ENCODE measurements at regions of chr6 and their contacts with region 1.

Region 1: DNA sequence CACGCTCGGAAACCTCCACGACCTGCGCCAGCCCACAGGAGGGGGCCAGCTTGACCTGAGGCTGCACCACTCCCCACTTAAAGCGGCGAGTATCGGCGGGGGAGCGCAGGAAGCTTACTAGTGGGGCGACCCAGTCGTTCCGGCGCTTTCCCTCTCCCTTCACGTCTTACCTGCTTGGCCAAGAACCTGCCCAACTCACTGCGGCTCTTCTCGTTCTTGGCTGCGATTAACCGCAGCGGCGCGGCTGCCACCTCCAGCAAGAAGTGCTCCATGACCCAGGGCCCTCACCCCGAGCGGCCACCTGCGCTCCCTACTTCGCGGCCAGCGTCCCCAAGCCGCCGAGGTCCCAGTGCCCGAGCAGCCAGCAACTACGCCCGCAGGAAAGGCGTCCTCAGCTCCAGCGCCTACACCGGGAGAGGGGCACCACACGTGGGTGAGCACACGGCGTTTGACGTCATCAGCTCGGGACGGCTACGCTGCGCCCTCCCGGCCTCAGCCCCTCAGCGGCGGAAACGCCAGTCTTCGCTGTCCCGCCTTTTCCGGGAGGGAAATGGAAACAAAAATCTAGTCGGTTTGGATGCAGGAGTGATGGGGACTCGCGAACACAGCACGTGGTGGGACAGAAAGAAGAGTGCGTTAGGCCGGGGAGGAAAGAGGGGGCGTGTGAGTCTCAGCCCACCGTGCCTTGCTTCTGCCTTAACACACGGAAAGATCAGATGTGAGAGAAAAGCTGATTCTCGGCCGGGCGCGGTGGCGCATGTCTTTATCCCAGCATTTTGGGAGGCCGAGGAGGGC is at the start of gene MDN1:
- DNase-seq: peak; percentile 93
- H3K4me3 Mint-ChIP-seq: peak within 1 kb of the TSS; percentile 86
- H3K27ac Mint-ChIP-seq: peak within 1 kb of the TSS; percentile 77
- H3K4me1 Mint-ChIP-seq: peaks cover 11% of the 10 kb centered on the region
- H3K27me3 Mint-ChIP-seq: no peaks in the 10 kb centered on the region
- CTCF ChIP-seq: no peak
- total RNA-seq, gene MDN1: 31.1 and 39.2 TPM in 2 replicates

Region 2: DNA sequence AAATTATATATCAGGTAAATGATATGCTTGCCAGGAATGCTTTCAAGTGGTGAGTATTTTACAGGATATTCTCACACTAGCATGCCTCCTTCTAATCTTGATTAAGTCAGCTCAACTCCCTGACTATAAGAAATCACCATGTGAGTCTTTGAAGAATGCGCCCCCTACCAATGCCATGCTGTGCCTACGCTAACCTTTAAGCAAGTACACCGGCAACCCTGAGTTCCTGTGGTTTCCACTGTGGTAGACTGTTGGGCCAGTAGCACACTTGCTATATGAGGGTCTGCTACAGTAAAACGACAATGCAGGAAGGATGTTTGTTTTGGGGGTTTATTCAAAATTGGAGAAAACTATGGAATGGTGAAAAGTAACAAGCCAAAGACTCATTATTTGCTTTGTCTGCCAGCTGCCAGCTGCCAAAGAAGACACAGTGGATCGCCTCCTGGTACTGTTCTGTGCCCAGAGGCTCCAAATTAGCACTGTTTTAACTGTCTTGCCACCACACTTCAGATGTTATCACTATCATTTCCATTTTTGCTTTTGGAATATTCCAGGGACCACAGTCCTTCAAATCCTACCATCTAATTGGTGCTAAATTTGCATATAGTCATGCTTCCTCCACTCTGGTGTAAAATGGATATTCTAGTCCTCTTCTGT is 1189.6 kb before region 1 on chr6:
- CTCF ChIA-PET with region 1: no interaction called
- POLR2A ChIA-PET with region 1: no interaction called
- intact Hi-C with region 1: no loop called
- DNase-seq: peak; percentile 3
- H3K4me3 Mint-ChIP-seq: no peak overlapping the region
- H3K27ac Mint-ChIP-seq: no peak overlapping the region
- H3K4me1 Mint-ChIP-seq: no peaks in the 10 kb centered on the region
- H3K27me3 Mint-ChIP-seq: no peaks in the 10 kb centered on the region
- CTCF ChIP-seq: no peak

Region 3: GRCh38 chr6:89638320-89639195 is 181.0 kb before region 1 on chr6 and contains the start of gene LYRM2:
- CTCF ChIA-PET with region 1: no interaction called
- POLR2A ChIA-PET with region 1: interaction called, 10 read pairs
- intact Hi-C with region 1: no loop called
- DNase-seq: peak; percentile 95
- H3K4me3 Mint-ChIP-seq: peak within 1 kb of the TSS; percentile 76
- H3K27ac Mint-ChIP-seq: peak within 1 kb of the TSS; percentile 92
- H3K4me1 Mint-ChIP-seq: peaks cover 16% of the 10 kb centered on the region
- H3K27me3 Mint-ChIP-seq: no peaks in the 10 kb centered on the region
- CTCF ChIP-seq: no peak
- total RNA-seq, gene LYRM2: 41.1 and 43.8 TPM in 2 replicates

Region 4: GRCh38 chr6:89807581-89807980 is 12.0 kb before region 1 on chr6:
- CTCF ChIA-PET with region 1: no interaction called
- POLR2A ChIA-PET with region 1: interaction called, 25 read pairs
- intact Hi-C with region 1: no loop called
- DNase-seq: no peak
- H3K4me3 Mint-ChIP-seq: no peak overlapping the region
- H3K27ac Mint-ChIP-seq: no peak overlapping the region
- H3K4me1 Mint-ChIP-seq: no peaks in the 10 kb centered on the region
- H3K27me3 Mint-ChIP-seq: no peaks in the 10 kb centered on the region
- CTCF ChIP-seq: no peak

Region 5: GRCh38 chr6:89829591-89830385 is 10.3 kb after region 1 on chr6 and contains the start of gene CASP8AP2:
- CTCF ChIA-PET with region 1: interaction called, 12 read pairs
- POLR2A ChIA-PET with region 1: interaction called, 131 read pairs
- intact Hi-C with region 1: no loop called
- DNase-seq: peak; percentile 99
- H3K4me3 Mint-ChIP-seq: peak within 1 kb of the TSS; percentile 100
- H3K27ac Mint-ChIP-seq: peak within 1 kb of the TSS; percentile 73
- H3K4me1 Mint-ChIP-seq: peaks cover 7% of the 10 kb centered on the region
- H3K27me3 Mint-ChIP-seq: no peaks in the 10 kb centered on the region
- CTCF ChIP-seq: no peak
- total RNA-seq, gene CASP8AP2: 11.3 and 11.5 TPM in 2 replicates

Region 6: DNA sequence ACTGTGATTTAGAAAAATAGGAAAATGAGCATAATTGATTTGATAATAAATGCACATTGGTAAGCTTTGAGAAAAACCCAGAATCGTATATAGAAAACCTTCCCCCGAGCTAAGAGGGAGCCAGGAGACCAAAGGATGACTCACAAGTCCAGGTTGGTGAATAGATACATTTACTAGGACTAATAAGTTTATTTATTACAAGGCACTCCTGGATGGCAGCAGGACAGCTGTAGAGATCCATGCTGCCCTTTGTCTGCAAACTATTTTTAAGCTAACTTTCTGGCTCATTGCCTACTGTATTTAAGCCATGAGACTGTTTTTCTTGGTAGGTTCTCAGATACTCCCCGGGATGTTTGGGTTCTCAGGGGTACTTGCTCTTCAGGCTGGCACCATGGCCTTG is 23.5 kb after region 1 on chr6:
- CTCF ChIA-PET with region 1: no interaction called
- POLR2A ChIA-PET with region 1: interaction called, 11 read pairs
- intact Hi-C with region 1: no loop called
- DNase-seq: peak; percentile 18
- H3K4me3 Mint-ChIP-seq: no peak overlapping the region
- H3K27ac Mint-ChIP-seq: peak overlapping the region; percentile 63
- H3K4me1 Mint-ChIP-seq: peaks cover 14% of the 10 kb centered on the region
- H3K27me3 Mint-ChIP-seq: no peaks in the 10 kb centered on the region
- CTCF ChIP-seq: no peak

Region 7: DNA sequence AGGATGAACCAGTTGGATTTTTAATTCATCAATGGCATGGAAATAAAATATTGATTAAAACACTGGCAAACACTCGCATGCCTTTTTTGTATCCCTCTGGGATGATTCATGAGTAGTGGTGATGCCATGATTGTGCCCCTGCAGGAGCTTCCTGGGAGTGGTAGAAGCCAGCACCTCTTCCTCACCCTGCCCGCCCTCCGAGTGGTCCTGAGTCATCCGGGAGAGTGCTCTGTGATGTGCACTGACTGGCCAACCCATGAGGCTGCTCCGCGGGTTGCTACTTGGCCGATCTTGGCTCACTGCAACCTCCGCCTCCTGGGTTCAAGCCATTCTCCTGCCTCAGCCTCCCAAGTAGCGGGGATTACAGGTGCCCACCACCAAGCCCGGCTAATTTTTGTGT is 102.2 kb after region 1 on chr6:
- CTCF ChIA-PET with region 1: no interaction called
- POLR2A ChIA-PET with region 1: no interaction called
- intact Hi-C with region 1: loop called (anchors 1 kb)
- DNase-seq: peak; percentile 70
- H3K4me3 Mint-ChIP-seq: no peak overlapping the region
- H3K27ac Mint-ChIP-seq: no peak overlapping the region
- H3K4me1 Mint-ChIP-seq: peaks cover 14% of the 10 kb centered on the region
- H3K27me3 Mint-ChIP-seq: no peaks in the 10 kb centered on the region
- CTCF ChIP-seq: no peak